Breast epithelium (tissue), 4 donors: ENCODE measurements at regions of chr6 and their contacts with region 1.

Region 1: GRCh38 chr6:15447546-15448232 is 201.8 kb downstream of the JARID2 start:
- DNase-seq: no peak
- H3K4me3 ChIP-seq: no peak overlapping the region
- H3K27ac ChIP-seq: no peak overlapping the region
- H3K4me1 ChIP-seq: no peaks in the 10 kb centered on the region
- H3K27me3 ChIP-seq: no peaks in the 10 kb centered on the region
- CTCF ChIP-seq: no peak
- POLR2A ChIP-seq: no peak

Region 2: GRCh38 chr6:15472621-15473020 is 24.9 kb after region 1 on chr6:
- intact Hi-C with region 1: loop called (anchors 1 kb)
- DNase-seq: no peak
- H3K4me3 ChIP-seq: no peak overlapping the region
- H3K27ac ChIP-seq: peak overlapping the region in 1 of 2 donors; percentile 20
- H3K4me1 ChIP-seq: no peaks in the 10 kb centered on the region
- H3K27me3 ChIP-seq: no peaks in the 10 kb centered on the region
- CTCF ChIP-seq: no peak
- POLR2A ChIP-seq: no peak

Region 3: GRCh38 chr6:15483060-15483459 is 35.4 kb after region 1 on chr6:
- intact Hi-C with region 1: no loop called
- DNase-seq: no peak
- H3K4me3 ChIP-seq: no peak overlapping the region
- H3K27ac ChIP-seq: no peak overlapping the region
- H3K4me1 ChIP-seq: no peaks in the 10 kb centered on the region
- H3K27me3 ChIP-seq: no peaks in the 10 kb centered on the region
- CTCF ChIP-seq: no peak
- POLR2A ChIP-seq: no peak

Region 4: GRCh38 chr6:15521582-15521981 is 73.9 kb after region 1 on chr6:
- intact Hi-C with region 1: loop called (anchors 2 kb)
- DNase-seq: no peak
- H3K4me3 ChIP-seq: no peak overlapping the region
- H3K27ac ChIP-seq: no peak overlapping the region
- H3K4me1 ChIP-seq: no peaks in the 10 kb centered on the region
- H3K27me3 ChIP-seq: no peaks in the 10 kb centered on the region
- CTCF ChIP-seq: no peak
- POLR2A ChIP-seq: no peak